ENCODE measurements at regions of chr20 and their contacts with region 1.

Region 1: GRCh38 chr20:16064989-16065707 is 508.1 kb downstream of the KIF16B start:
- DNase-seq: no peak
- H3K4me3 ChIP-seq: no peak overlapping the region
- H3K27ac ChIP-seq: no peak overlapping the region
- H3K4me1 ChIP-seq: peaks cover 0 to 24% (median 11%) of the 10 kb centered on the region in 4 donors
- H3K27me3 ChIP-seq: no peaks in the 10 kb centered on the region
- CTCF ChIP-seq: no peak

Region 2: DNA sequence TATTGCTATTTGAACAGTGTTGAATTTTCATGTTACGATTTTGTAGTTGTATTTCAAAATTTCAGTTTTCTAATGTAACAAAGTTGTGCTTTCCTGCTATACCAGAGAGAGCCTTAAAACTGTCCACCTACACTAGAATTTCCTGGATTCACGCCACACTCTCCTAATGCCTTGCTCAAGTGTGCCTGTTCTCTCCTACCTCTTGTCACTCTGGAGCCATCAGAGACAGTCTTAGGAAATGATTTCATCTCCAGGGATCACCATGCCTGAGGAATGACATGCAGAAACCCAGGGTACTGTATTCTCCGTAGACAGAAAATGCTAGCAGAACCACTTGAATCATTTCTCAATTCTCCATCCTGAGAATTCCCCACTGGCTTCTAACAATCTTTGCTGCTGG is 159.5 kb before region 1 on chr20:
- intact Hi-C with region 1: no loop called
- DNase-seq: no peak
- H3K4me3 ChIP-seq: no peak overlapping the region
- H3K27ac ChIP-seq: no peak overlapping the region
- H3K4me1 ChIP-seq: peaks cover 0 to under 1% (median 0%) of the 10 kb centered on the region in 4 donors
- H3K27me3 ChIP-seq: no peaks in the 10 kb centered on the region
- CTCF ChIP-seq: no peak

Region 3: GRCh38 chr20:16475225-16475624 is 410.1 kb after region 1 on chr20:
- intact Hi-C with region 1: no loop called
- DNase-seq: no peak
- H3K4me3 ChIP-seq: no peak overlapping the region
- H3K27ac ChIP-seq: peak overlapping the region in 1 of 2 donors; percentile 1
- H3K4me1 ChIP-seq: peaks cover 4 to 23% (median 13%) of the 10 kb centered on the region in 4 donors
- H3K27me3 ChIP-seq: no peaks in the 10 kb centered on the region
- CTCF ChIP-seq: no peak

Region 4: DNA sequence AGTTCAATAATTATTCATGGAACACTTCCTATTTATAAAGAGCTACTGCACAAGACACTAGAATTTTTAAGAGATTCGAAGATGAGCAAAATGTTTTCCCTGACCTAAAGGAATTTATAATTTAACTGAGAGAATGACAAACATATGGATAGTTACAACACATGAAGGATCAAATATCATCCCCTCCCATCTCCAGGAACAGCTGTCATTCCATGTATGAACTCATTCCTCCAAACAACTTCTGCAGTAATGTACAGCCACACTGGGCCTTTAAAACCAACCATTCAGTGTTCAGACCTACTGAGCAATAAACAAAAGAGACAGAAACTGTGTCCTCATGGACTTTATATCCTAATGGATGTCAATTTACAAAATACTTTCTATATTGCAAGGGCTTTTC is 420.3 kb after region 1 on chr20:
- intact Hi-C with region 1: loop called (anchors 5 kb)
- DNase-seq: no peak
- H3K4me3 ChIP-seq: no peak overlapping the region
- H3K27ac ChIP-seq: no peak overlapping the region
- H3K4me1 ChIP-seq: no peaks in the 10 kb centered on the region
- H3K27me3 ChIP-seq: no peaks in the 10 kb centered on the region
- CTCF ChIP-seq: no peak